GM10248 (cell line): ENCODE measurements at regions of chr2 and their contacts with region 1.

Region 1: GRCh38 chr2:174688079-174688478 is 76.2 kb downstream of the CHRNA1 start:
- DNase-seq: no peak
- CTCF ChIP-seq: peak; percentile 1

Region 2: DNA sequence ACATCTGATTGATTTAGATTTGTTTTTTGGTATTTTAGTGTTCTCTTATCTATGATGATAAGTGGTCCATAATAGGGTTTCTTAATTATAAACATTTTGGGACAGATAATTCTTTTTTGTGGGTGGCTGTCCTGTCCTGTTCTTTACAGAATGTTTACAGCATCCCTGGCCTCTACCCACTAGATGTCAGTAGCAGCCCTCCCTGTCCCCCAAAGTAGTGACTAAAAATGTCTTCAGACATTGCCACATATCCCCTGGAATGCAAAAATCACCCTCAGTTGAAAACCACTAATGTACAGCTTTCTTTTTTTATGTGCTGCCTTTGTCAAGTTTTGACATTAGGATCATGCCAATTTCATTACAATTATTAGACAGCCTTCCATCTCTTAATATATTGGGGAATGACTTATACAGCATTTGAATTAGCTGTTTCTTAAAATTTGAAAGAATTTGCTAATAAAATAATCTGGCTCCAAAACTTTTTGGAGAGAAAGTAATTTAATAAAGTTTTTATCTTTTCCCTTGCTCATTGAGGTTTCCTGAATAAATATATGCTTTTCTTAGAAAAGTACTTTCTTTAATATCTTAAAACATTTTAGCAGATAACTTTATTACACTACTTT is 110.0 kb before region 1 on chr2:
- CTCF ChIA-PET with region 1: interaction called, 67 read pairs
- POLR2A ChIA-PET with region 1: no interaction called
- DNase-seq: no peak
- CTCF ChIP-seq: peak; percentile 49

Region 3: GRCh38 chr2:174585146-174585954 is 102.7 kb before region 1 on chr2:
- CTCF ChIA-PET with region 1: interaction called, 67 read pairs
- POLR2A ChIA-PET with region 1: no interaction called
- DNase-seq: no peak
- CTCF ChIP-seq: no peak

Region 4: DNA sequence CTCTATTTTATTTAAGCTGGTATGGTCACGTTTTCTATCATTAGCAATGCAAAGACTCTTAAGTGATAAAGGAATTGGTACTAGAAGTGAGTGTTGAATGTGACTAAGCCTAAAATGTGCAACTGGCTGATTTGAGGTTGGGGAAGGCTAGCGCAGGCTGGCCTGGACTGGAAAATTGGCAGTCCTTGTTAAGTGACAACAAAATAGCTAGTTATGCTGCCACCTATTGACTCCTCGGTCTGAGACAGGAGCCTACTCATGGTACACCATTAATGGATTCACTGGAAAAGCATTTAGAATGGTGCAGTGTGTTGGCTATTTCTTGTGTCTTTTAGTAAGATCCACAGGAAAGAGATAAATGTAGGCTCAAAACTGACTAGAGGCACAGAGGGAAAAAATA is 84.8 kb before region 1 on chr2:
- CTCF ChIA-PET with region 1: interaction called, 68 read pairs
- POLR2A ChIA-PET with region 1: no interaction called
- DNase-seq: peak; percentile 35
- CTCF ChIP-seq: peak; percentile 60

Region 5: DNA sequence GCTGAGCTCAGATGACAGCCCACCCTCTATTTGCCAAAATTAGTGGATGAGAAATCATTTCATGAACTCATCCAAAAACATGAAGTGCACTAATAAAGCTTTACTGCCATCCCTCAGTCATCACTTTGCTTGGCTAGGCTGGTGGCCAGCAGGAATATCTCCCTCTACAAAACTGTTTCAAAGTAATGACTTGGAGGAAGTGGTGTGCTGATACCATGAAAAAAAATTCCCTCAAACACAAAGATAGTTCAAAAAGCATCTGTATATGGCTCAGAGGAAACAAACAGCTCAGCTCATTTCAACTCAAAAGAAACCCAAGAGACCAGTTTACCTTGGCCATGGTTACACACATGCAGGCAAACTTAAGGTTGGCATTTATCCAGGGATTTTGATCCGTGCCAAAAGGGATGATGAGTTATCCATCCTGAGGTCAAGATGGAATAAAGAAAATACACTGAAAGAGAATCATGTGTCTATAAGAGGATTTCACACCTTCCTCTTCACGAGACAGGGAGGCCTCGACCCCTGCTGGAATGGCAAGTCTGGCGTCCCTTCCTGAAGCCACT is 72.1 kb before region 1 on chr2:
- CTCF ChIA-PET with region 1: interaction called, 15 read pairs
- POLR2A ChIA-PET with region 1: no interaction called
- DNase-seq: no peak
- CTCF ChIP-seq: no peak

Region 6: DNA sequence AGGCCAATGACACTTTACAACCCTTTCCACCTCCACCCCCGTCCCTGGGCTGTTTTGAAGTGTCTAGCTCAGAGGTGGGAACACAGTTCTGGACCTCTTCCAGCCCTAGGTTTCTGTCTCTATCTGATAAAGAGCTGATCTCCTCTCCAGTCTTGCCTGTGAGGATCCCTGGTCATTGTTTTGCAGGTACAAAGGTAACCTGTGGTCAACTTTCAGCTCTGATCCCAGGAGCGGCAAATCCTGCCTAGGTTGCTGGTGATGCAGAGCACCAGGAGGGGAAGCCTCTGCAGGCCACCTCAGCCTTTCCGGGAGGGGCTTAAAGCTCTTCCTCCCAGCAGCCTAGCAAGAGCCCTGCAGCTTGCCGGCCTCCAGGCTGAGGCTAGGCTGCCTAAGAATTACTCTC is 20.7 kb before region 1 on chr2:
- CTCF ChIA-PET with region 1: interaction called, 19 read pairs
- POLR2A ChIA-PET with region 1: no interaction called
- DNase-seq: no peak
- CTCF ChIP-seq: no peak

Region 7: DNA sequence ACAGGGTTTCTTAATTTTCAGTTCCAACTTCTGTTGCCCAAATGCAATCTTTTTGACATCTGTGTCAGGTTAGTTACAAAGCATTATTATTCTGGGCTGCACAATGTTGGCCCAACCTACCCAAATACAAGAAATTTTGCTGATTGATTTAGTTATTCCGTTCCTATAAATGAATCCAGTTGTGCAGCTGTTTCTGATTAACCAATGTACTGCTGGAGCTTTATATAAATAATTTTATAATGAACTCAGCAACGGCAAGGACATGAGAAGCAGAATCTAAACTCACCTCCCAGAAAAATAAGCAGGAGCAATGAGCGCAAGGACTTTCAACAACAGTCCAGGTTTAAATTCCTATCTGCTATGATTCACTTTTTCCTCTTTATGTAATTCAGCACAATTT is 14.2 kb before region 1 on chr2:
- CTCF ChIA-PET with region 1: interaction called, 21 read pairs
- POLR2A ChIA-PET with region 1: no interaction called
- DNase-seq: no peak
- CTCF ChIP-seq: no peak

Region 8: DNA sequence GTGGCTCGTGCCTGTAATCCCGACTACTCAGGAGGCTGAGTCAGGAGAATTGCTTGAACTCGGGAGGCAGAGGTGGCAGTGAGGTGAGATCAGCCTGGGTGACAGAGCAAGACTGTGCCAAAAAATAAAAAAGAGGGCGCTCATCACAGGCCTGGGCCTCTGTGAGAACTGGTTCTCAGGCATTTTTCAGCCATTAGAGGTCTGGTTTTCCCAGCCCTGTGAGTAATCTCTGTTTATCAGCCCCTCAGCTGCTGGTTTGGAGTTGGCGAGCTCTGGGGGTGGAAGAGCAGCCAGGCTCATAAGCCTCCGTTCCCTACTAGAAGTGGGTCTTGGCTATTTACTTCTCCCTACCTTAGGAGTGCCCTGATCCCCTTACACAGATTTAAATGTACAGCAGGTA is 23.1 kb after region 1 on chr2:
- CTCF ChIA-PET with region 1: no interaction called
- POLR2A ChIA-PET with region 1: no interaction called
- DNase-seq: no peak
- CTCF ChIP-seq: no peak